MCF 10A (cell line): ENCODE measurements at regions of chr21 and their contacts with region 1.

Region 1: GRCh38 chr21:34603002-34603709 is 11.8 kb downstream of the RCAN1 start:
- DNase-seq: peak; percentile 68
- H3K4me3 Mint-ChIP-seq: no peak overlapping the region
- H3K27ac Mint-ChIP-seq: no peak overlapping the region
- H3K4me1 Mint-ChIP-seq: peaks cover 12% of the 10 kb centered on the region
- H3K27me3 Mint-ChIP-seq: no peaks in the 10 kb centered on the region
- CTCF ChIP-seq: peak; percentile 82

Region 2: DNA sequence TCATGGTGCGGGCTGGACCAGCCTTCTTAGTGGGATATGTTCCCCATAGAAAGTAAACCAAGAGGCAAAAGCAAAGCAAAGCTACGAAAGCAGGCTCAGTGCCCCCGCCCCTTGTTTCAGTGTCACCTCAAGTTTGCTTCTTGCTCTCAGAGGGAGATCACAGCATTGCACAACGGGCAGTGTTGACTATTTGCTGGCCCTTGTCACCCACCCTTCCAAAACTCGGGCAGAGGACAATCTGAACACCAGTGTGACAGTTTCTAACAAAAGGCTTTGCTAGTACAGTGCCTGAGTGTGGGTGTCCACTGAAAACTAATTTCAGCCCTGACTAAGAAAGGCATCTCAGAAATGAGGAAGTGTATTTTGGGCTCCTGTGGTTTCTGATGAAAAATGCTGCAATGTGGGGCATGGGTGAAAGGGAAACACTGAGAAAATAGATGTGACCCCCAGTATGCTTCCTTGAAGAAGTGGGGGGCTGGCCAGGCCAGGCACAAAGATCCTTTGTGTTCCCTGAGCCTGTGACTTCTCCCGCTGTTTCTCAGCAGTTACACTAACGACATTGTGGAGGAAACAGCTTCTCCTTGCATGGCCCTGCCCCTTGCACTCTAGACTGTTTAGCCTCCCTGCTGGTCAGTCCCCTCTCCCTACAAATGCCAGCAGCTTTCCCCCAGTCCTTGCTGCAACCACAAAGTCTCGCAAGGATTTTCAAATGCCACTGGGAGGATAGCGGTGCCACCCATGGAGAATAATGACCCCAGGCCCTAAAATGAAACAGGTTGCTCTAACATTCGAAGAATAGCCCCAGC is 57.9 kb before region 1 on chr21:
- CTCF ChIA-PET with region 1: interaction called, 4 read pairs
- POLR2A ChIA-PET with region 1: no interaction called
- intact Hi-C with region 1: loop called (anchors 10 kb)
- DNase-seq: no peak
- H3K4me3 Mint-ChIP-seq: no peak overlapping the region
- H3K27ac Mint-ChIP-seq: peak overlapping the region; percentile 44
- H3K4me1 Mint-ChIP-seq: peaks cover 12% of the 10 kb centered on the region
- H3K27me3 Mint-ChIP-seq: no peaks in the 10 kb centered on the region
- CTCF ChIP-seq: no peak

Region 3: DNA sequence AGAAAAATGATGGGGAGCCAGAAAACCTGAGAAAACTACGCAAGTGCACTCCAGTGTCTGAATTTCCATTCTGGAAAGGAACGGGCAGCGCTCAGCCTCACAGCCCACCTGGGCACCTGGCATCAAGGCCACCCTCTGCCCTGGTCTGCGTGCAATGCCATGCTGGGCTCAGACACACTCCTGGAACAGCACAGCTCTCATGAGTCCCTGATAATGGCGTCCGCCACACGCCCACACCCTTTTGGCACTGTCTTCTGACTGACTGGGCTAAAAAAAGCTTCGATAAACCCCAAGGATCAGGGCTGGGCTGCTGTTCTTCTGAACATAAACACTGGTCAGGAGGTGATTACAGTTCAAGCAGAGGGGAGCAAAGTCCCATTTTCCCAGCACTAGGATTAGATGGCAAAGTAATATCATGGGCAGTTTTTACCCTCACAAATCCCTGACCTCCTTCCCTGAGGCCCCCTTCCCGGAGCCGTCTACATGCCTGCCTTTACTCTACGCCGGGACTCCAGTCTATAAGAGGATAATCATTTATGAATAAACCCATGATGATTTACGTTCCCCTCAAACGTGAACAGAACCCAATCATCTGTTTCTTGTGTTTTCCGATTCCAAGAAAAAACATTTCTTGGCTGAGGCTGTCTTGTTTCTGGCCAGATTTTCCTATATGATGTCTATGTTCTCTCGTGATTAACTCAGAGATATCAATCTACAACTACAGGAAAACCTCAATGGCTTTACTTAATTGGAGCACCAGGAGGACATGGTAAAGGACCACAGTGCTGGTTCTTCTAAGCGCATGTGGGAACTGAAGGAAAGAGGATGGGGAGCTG is 10.8 kb before region 1 on chr21:
- CTCF ChIA-PET with region 1: interaction called, 32 read pairs
- POLR2A ChIA-PET with region 1: no interaction called
- intact Hi-C with region 1: no loop called
- DNase-seq: no peak
- H3K4me3 Mint-ChIP-seq: no peak overlapping the region
- H3K27ac Mint-ChIP-seq: no peak overlapping the region
- H3K4me1 Mint-ChIP-seq: no peaks in the 10 kb centered on the region
- H3K27me3 Mint-ChIP-seq: no peaks in the 10 kb centered on the region
- CTCF ChIP-seq: no peak

Region 4: GRCh38 chr21:34614633-34615486 is 11.7 kb after region 1 on chr21 and contains the start of gene RCAN1:
- CTCF ChIA-PET with region 1: interaction called, 42 read pairs
- POLR2A ChIA-PET with region 1: interaction called, 5 read pairs
- intact Hi-C with region 1: no loop called
- DNase-seq: peak; percentile 94
- H3K4me3 Mint-ChIP-seq: peak within 1 kb of the TSS; percentile 81
- H3K27ac Mint-ChIP-seq: peak within 1 kb of the TSS; percentile 63
- H3K4me1 Mint-ChIP-seq: peaks cover 6% of the 10 kb centered on the region
- H3K27me3 Mint-ChIP-seq: no peaks in the 10 kb centered on the region
- CTCF ChIP-seq: no peak
- total RNA-seq, gene RCAN1: 11.9 and 18.4 TPM in 2 replicates

Region 5: DNA sequence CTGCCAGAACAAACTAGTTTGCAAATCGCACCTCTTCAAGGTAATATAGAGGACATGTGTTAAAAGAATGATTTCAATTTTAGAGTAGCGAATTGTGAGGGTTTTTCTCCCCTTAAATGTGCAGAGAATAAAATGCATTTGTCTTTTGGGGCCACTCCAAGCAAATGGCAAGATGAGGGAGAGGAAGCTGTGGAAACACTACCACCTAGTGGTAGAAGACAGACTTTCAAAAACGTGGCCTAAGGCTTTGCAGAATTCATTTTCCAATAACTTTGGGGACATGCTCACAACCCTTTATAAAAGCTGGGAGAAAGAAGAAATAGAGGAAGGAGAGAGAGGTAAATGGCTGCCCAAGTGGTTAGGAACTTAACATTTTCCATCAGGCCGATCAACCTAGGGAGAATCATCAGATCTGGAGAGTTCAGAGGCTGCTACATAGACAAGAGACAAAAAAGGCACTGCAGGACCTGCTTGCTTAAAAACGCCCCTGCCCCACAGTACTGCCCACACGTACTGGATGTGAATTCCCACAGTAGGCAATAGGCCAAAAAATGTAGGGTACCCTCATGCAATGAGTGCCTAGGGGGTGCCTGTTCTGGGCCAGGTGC is 27.5 kb after region 1 on chr21:
- CTCF ChIA-PET with region 1: interaction called, 31 read pairs
- POLR2A ChIA-PET with region 1: no interaction called
- intact Hi-C with region 1: no loop called
- DNase-seq: peak; percentile 70
- H3K4me3 Mint-ChIP-seq: no peak overlapping the region
- H3K27ac Mint-ChIP-seq: no peak overlapping the region
- H3K4me1 Mint-ChIP-seq: no peaks in the 10 kb centered on the region
- H3K27me3 Mint-ChIP-seq: peaks cover 49% of the 10 kb centered on the region
- CTCF ChIP-seq: peak; percentile 79

Region 6: GRCh38 chr21:34667761-34668160 is 64.6 kb after region 1 on chr21:
- CTCF ChIA-PET with region 1: no interaction called
- POLR2A ChIA-PET with region 1: no interaction called
- intact Hi-C with region 1: no loop called
- DNase-seq: no peak
- H3K4me3 Mint-ChIP-seq: no peak overlapping the region
- H3K27ac Mint-ChIP-seq: no peak overlapping the region
- H3K4me1 Mint-ChIP-seq: no peaks in the 10 kb centered on the region
- H3K27me3 Mint-ChIP-seq: peaks cover 10% of the 10 kb centered on the region
- CTCF ChIP-seq: no peak